ENCODE measurements at regions of chr15 and their contacts with region 1.

Region 1: DNA sequence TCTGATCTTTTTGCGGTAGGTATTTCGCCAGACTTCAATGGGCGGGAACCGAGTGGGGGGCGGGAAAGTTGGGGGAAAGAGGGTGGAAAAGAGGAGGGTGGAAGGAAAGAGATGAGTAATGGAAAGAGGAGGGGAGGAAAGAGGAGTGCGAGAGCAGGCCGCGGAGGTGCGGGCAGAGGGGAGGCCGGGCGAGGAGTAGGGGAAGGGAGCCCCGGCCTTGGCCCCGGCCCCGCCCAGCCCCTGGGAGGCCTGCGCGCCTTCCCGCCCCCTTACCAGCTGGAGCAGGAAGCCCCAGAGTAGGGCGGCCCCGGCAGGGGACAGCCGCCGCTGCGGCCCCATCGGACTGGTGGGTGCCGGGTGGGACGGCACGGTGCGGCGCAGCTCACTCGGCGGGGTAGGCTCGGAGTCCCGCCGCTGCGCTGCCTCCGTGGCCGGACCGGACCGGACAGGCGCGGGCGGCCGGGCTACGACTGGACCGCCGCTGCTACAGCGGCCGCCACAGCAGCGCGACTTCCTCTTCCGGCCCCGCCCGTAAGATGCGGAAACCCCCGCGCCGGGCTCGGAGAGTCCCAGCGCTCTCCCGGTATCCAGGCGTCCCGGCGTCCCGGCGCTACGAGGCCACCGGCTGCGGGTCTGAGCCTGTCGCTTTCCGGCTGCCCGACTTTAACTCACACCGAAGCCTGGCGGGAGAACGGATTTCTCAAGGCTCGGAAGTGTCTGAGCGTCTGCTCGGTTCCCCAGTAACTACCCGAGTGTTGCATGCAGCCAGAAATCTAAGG is at the start of gene SPPL2A:
- DNase-seq: peak; percentile 77
- H3K4me3 Mint-ChIP-seq: peak within 1 kb of the TSS; percentile 96
- H3K27ac Mint-ChIP-seq: peak within 1 kb of the TSS; percentile 97
- H3K4me1 Mint-ChIP-seq: peaks cover 69% of the 10 kb centered on the region
- H3K27me3 Mint-ChIP-seq: no peaks in the 10 kb centered on the region
- total RNA-seq, gene SPPL2A: 100 and 103 TPM in 2 replicates

Region 2: GRCh38 chr15:50424066-50424890 is 341.1 kb before region 1 on chr15 and contains the start of gene USP8:
- intact Hi-C with region 1: loop called (anchors 1 kb)
- DNase-seq: peak; percentile 92
- H3K4me3 Mint-ChIP-seq: peak within 1 kb of the TSS; percentile 98
- H3K27ac Mint-ChIP-seq: peak within 1 kb of the TSS; percentile 92
- H3K4me1 Mint-ChIP-seq: peaks cover 25% of the 10 kb centered on the region
- H3K27me3 Mint-ChIP-seq: no peaks in the 10 kb centered on the region
- total RNA-seq, gene USP8: 66.2 and 66.3 TPM in 2 replicates

Region 3: DNA sequence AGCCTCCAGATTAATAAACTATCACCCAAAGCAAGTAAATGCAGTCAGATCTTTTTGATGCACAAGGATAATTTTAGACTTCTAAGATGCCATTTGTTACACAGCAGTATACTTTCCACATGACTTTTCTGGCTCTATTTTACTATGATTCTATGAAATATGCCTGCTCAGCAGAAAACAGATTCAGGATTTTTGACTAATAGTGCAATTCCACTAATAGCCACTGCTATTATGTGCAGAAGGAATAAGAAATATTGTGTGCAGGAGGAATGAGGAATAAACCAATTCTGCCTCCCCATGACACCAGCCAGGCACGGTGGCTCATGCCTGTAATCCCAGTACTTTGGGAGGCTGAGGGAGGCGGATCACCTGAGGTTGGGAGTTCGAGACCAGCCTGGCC is 11.7 kb after region 1 on chr15:
- intact Hi-C with region 1: no loop called
- DNase-seq: no peak
- H3K4me3 Mint-ChIP-seq: no peak overlapping the region
- H3K27ac Mint-ChIP-seq: no peak overlapping the region
- H3K4me1 Mint-ChIP-seq: peaks cover 9% of the 10 kb centered on the region
- H3K27me3 Mint-ChIP-seq: peaks cover 3% of the 10 kb centered on the region

Measured in activated T-helper 1 cell treated with anti-CD3 and anti-CD28 coated beads, Interleukin-12 subunit alpha, Interleukin-12 subunit beta, Interleukin-2, Interleukin-4 antibody, amounts not matched to agents 30 ng/mL and 10 ng/mL and 1 ng/mL, durations not matched to agents 14 hours and 24 hours and 36 hours (primary cell).